ENCODE measurements at regions of chr6 and their contacts with region 1.

Region 1: GRCh38 chr6:46410334-46410953 is 80.8 kb downstream of the RCAN2 start:
- DNase-seq: peak; percentile 30
- H3K27ac ChIP-seq: no peak overlapping the region
- CTCF ChIP-seq: peak; percentile 17; the same call in 1 of the 2 replicates

Region 2: DNA sequence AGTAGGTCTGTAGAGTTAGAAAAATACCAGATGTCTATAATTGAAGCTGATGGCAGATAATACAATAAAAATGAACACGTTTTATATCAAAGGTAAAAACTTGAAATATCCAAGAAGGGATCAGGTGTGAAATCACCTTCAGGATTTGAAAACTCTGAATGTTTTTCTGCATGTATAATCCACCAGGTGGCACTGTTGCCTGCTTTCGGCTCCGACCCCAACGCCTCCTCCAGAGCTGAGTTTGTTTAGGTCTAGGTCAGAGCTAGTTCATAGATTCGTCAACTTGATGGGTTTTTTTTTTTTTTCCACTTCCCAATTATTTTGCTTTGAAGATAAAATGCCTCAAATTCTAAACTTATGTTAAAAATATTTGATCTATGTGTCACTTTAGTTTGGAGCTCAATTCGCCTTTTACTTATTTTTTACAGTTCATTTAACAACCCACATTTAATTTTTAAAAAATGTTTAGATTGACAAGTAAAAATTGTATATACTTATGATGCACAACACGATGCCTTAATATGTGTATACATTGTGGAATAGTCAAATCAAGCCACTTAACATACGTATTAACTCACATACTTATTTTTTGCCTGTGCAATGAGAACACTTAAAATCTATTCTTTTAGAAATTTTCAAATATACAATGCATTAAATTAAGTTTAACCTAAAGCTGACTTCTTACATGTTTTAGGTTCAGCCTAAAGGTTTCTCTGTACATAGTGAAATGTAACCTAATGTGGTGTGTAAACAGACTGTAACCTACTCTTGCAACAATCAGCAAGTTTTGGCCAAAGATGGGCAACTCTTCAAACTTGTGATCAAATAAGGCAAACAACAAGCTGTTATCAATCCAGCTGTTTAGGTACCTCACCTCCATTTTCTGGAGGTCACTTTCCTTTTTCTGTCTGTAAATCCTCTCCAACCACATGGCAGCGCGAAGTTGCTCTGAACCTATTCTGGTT is 320.0 kb before region 1 on chr6:
- CTCF ChIA-PET with region 1: interaction called, 12 read pairs
- POLR2A ChIA-PET with region 1: no interaction called
- DNase-seq: peak; percentile 63
- H3K27ac ChIP-seq: no peak overlapping the region
- CTCF ChIP-seq: peak; percentile 85

Region 3: GRCh38 chr6:46221222-46221793 is 189.1 kb before region 1 on chr6:
- CTCF ChIA-PET with region 1: interaction called, 19 read pairs
- POLR2A ChIA-PET with region 1: no interaction called
- DNase-seq: peak; percentile 36
- H3K27ac ChIP-seq: no peak overlapping the region
- CTCF ChIP-seq: peak; percentile 76

Region 4: DNA sequence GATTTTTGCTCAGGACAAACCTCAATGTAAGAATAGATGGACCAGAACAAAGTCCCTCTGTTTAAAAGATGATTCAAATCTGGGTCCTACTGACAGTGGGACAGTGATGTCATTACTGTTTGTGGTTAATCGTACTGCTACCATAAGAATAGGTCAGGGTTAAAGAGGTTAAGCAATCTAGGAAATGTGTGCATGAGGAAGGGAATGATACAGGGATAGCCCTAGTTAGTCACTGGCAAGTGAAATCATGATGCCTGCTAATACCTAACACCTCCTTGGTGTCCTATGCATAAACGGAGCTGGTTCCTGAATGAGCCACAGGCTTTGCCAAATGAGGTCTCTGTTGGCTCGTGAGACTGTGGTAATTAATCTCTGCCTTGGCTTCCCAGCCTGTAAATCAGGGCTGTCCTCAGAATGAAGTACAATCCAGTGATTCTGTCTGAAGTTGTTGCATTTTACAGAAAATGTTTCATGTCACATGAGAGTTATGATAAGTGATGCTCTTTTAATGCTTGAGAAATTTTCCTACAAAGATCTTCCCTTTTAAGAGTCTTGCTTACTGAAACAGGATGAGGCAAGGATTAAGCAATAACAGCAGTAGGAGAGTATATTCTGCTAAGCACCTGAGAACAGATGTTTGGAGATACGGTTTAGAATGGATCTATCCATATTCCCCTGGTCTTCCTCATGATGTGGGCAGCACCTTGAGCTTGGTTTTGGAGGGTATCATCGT is 386.6 kb after region 1 on chr6:
- CTCF ChIA-PET with region 1: no interaction called
- POLR2A ChIA-PET with region 1: no interaction called
- DNase-seq: peak; percentile 9
- H3K27ac ChIP-seq: no peak overlapping the region
- CTCF ChIP-seq: no peak

Measured in RWPE1 (cell line).